ENCODE measurements at regions of chr18 and their contacts with region 1.

Region 1: DNA sequence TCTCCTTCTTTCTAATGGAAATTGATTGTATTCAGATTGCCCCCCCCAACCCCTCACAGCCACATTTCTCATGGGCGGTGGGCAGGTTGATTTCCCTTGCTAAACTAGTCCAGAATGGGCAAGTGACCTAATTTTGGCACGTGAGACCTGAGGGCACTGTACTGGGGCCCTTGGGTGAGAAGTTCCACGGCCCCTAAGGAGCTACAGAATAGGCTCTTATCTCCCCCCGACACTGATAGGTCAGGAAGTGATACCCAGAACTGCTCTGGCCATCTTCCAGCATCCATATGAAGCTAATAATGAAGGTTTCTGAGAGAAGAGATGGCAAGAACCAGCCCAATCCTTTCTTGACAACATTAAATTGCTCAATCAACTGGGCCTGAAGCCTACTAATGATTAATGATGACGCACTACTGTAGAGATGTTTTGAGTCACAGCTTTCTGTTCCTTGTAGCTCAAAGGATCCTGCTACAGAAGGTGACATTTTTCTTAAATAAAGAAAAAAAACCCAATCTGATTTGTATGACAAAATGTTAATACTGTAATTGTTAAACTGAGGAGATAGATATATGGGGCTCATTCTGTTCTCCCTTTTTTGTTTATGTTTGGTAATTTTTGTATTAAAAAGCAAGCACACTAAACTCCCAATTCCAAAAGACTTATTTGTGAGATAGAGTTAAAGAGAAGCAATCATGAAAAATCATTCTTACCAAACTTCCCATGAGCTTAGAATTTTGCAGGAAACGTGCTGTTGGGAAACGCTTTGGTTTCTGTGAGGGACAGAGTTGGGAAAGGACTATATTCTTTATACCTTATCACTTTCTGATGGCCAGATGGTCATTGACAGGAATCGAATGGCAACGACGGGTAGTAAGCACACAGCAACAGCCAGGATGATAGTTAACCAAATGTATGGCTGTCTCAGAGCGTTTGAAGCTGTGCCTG is 28.2 kb upstream of the NARS1 start:
- DNase-seq: no peak
- ATAC-seq: peak; percentile 90

Region 2: DNA sequence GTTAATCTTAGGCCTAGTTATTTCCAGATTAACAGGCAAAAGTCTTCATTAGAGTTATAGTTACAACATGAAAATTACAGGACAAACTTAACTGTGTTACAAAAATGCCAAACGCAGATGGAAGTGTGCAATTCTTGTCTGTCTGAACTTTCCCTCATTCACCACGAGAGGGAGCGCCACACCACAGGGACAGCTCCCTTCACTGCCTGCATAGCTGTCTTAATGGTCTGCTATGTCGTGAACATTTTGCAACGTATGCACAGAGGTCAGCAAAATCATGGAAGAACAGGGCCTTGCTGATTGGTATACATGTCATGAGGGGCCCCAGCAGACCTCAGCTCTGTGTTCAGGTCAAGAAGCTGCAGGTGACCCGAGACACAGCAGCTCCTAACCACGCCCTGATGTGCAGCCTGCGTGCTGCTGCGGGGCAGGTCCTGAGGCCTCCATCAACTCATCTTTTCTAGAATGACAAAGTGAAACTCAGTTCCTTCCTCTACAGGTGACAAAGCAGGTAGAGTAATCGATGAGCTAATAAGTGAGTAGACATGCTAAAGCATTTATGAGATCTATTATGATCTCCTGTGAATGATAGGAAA is 232.1 kb after region 1 on chr18:
- intact Hi-C with region 1: loop called (anchors 10 kb)
- DNase-seq: peak; percentile 54
- ATAC-seq: peak; percentile 92